ENCODE measurements at regions of chr12 and their contacts with region 1.

Region 1: DNA sequence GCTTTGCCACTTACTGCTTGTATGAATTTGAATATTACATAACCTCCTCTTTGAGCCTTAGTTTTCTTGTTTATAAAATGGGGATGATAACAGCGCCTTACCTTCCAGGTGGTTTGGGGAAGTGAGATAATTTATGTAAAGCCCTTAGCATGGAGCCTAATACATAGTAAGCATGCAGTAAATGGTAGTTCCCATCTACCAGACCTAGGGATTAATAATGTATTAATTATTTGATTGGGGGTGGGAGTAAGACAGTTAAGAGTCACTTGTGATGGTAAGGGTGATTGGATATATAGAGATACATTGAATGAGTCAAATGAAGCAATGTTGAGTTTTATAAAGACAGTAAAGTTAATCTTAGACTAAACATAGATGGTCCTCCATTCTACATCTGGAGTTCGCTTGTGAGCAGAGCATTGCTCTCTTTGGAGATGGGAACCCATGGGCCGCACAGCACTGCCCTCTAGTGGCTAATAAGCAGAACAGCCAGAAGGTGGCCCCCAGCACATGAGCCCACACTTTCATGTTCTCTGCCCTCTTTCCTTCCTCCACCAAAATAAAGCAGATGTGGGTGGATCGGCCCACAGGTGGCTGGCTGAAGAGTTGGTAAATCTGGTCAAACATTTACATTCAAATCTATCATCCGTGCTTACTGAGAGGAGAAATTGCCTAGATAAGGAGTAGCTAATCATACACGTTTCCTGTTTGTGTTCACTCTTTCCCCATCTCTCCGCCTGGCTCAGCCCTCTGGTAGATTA is 26.5 kb upstream of the TAMALIN start:
- DNase-seq: peak; percentile 84
- H3K4me3 ChIP-seq: no peak overlapping the region
- H3K27ac ChIP-seq: no peak overlapping the region
- H3K4me1 ChIP-seq: peaks cover 36% of the 10 kb centered on the region
- H3K27me3 ChIP-seq: no peaks in the 10 kb centered on the region
- CTCF ChIP-seq: peak; percentile 90 to 97
- POLR2A ChIP-seq: no peak

Region 2: DNA sequence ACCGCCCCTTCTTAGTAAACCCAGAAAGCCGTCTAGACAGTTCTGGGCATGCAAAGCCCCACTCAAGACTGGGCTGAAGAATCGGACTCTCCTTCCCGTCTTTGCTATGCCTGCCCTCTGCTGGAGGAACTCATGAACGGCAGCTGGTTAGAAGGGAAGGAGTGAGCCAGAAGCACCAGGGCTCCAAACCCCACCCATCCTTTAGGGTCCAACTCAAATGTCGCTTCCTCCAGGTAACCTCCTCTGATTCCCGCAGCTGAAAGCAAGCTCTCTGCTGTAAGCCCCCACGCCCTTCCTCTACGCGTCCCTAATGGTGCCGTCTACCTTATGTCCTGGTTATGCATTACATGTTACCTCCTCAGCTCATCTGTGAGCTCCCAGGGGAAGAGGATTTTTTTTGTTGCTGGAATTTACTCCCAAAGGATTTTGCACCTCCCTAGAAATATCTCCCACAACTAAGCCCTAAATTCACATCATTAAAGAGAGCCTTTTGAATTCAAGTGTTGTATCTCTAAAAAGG is 448.2 kb before region 1 on chr12:
- CTCF ChIA-PET with region 1: no interaction called
- POLR2A ChIA-PET with region 1: no interaction called
- dilution Hi-C with region 1: no loop called
- intact Hi-C with region 1: no loop called
- DNase-seq: peak; percentile 73
- H3K4me3 ChIP-seq: no peak overlapping the region
- H3K27ac ChIP-seq: no peak overlapping the region
- H3K4me1 ChIP-seq: no peaks in the 10 kb centered on the region
- H3K27me3 ChIP-seq: peaks cover 2 to 3% of the 10 kb centered on the region in 2 experiments
- CTCF ChIP-seq: peak; percentile 82 to 90
- POLR2A ChIP-seq: no peak

Region 3: GRCh38 chr12:51752234-51752889 is 227.9 kb before region 1 on chr12:
- CTCF ChIA-PET with region 1: no interaction called
- POLR2A ChIA-PET with region 1: no interaction called
- dilution Hi-C with region 1: no loop called
- intact Hi-C with region 1: no loop called
- DNase-seq: peak; percentile 93
- H3K4me3 ChIP-seq: no peak overlapping the region
- H3K27ac ChIP-seq: no peak overlapping the region
- H3K4me1 ChIP-seq: peaks cover 27% of the 10 kb centered on the region
- H3K27me3 ChIP-seq: no peaks in the 10 kb centered on the region
- CTCF ChIP-seq: no peak
- POLR2A ChIP-seq: no peak

Region 4: GRCh38 chr12:51951199-51951842 is 28.9 kb before region 1 on chr12 and contains the start of gene ACVR1B:
- CTCF ChIA-PET with region 1: interaction called, 4 read pairs
- POLR2A ChIA-PET with region 1: no interaction called
- dilution Hi-C with region 1: no loop called
- intact Hi-C with region 1: loop called (anchors 2 kb)
- DNase-seq: peak; percentile 92
- H3K4me3 ChIP-seq: peak within 1 kb of the TSS; percentile 59 to 89 (median 73)
- H3K27ac ChIP-seq: peak within 1 kb of the TSS; percentile 58
- H3K4me1 ChIP-seq: peaks cover 28% of the 10 kb centered on the region
- H3K27me3 ChIP-seq: peaks cover 0 to 4% of the 10 kb centered on the region in 2 experiments
- CTCF ChIP-seq: no peak
- POLR2A ChIP-seq: peak; percentile 54
- total RNA-seq, gene ACVR1B: 25.4 and 33.7 TPM in 2 replicates

Region 5: GRCh38 chr12:51961834-51962233 is 18.4 kb before region 1 on chr12:
- CTCF ChIA-PET with region 1: interaction called, 11 read pairs
- POLR2A ChIA-PET with region 1: no interaction called
- dilution Hi-C with region 1: no loop called
- intact Hi-C with region 1: no loop called
- DNase-seq: peak; percentile 53
- H3K4me3 ChIP-seq: no peak overlapping the region
- H3K27ac ChIP-seq: no peak overlapping the region
- H3K4me1 ChIP-seq: peaks cover 29% of the 10 kb centered on the region
- H3K27me3 ChIP-seq: no peaks in the 10 kb centered on the region
- CTCF ChIP-seq: no peak
- POLR2A ChIP-seq: no peak